ENCODE measurements at regions of chr12 and their contacts with region 1.

Region 1: GRCh38 chr12:13196130-13196921 is at the start of gene EMP1:
- DNase-seq: peak; percentile 93
- H3K4me3 ChIP-seq: peak within 1 kb of the TSS; percentile 17 to 63 (median 40)
- H3K27ac ChIP-seq: peak within 1 kb of the TSS; percentile 67 to 91 (median 86)
- H3K4me1 ChIP-seq: peaks cover 9 to 59% (median 19%) of the 10 kb centered on the region in 4 donors
- H3K27me3 ChIP-seq: peaks cover 8% of the 10 kb centered on the region
- CTCF ChIP-seq: no peak
- EP300 ChIP-seq: no peak
- POLR2A ChIP-seq: peak; percentile 93
- total RNA-seq, gene EMP1: 43.2 to 837 (median 738) TPM

Region 2: GRCh38 chr12:13100882-13101769 is 95.2 kb before region 1 on chr12:
- in situ Hi-C with region 1: loop called in 1 of 4 experiments (anchors 10 kb)
- intact Hi-C with region 1: loop called (anchors 5 kb)
- DNase-seq: peak; percentile 92
- H3K4me3 ChIP-seq: peak overlapping the region; percentile 43 to 74 (median 53)
- H3K27ac ChIP-seq: peak overlapping the region; percentile 83 to 94 (median 88)
- H3K4me1 ChIP-seq: peaks cover 10 to 55% (median 41%) of the 10 kb centered on the region in 4 donors
- H3K27me3 ChIP-seq: no peaks in the 10 kb centered on the region
- CTCF ChIP-seq: peak in 1 of 5 experiments; percentile 10
- EP300 ChIP-seq: peak; percentile 80
- POLR2A ChIP-seq: peak; percentile 55

Region 3: GRCh38 chr12:13362260-13362841 is 166.0 kb after region 1 on chr12:
- in situ Hi-C with region 1: no loop called
- intact Hi-C with region 1: no loop called
- DNase-seq: peak; percentile 82
- H3K4me3 ChIP-seq: no peak overlapping the region
- H3K27ac ChIP-seq: no peak overlapping the region
- H3K4me1 ChIP-seq: peaks cover 0 to 3% (median 0%) of the 10 kb centered on the region in 4 donors
- H3K27me3 ChIP-seq: no peaks in the 10 kb centered on the region
- CTCF ChIP-seq: peak; percentile 69 to 92 (median 84)
- EP300 ChIP-seq: no peak
- POLR2A ChIP-seq: no peak